ENCODE measurements at regions of chr1 and their contacts with region 1.

Region 1: GRCh38 chr1:98344731-98345130 is 316.8 kb upstream of the SNX7 start:
- DNase-seq: peak; percentile 88
- H3K4me3 ChIP-seq: no peak overlapping the region
- H3K27ac ChIP-seq: peak overlapping the region; percentile 90
- H3K4me1 ChIP-seq: peaks cover 38% of the 10 kb centered on the region
- H3K27me3 ChIP-seq: no peaks in the 10 kb centered on the region
- CTCF ChIP-seq: no peak
- POLR2A ChIP-seq: peak; percentile 12

Region 2: GRCh38 chr1:98260839-98261238 is 83.9 kb before region 1 on chr1:
- CTCF ChIA-PET with region 1: no interaction called
- POLR2A ChIA-PET with region 1: no interaction called
- dilution Hi-C with region 1: no loop called
- intact Hi-C with region 1: loop called (anchors 1 kb)
- DNase-seq: peak; percentile 12
- H3K4me3 ChIP-seq: no peak overlapping the region
- H3K27ac ChIP-seq: no peak overlapping the region
- H3K4me1 ChIP-seq: peaks cover 41% of the 10 kb centered on the region
- H3K27me3 ChIP-seq: no peaks in the 10 kb centered on the region
- CTCF ChIP-seq: peak in 1 of 2 donors; percentile 37
- POLR2A ChIP-seq: no peak

Region 3: GRCh38 chr1:98388441-98388840 is 43.7 kb after region 1 on chr1:
- CTCF ChIA-PET with region 1: interaction called, 4 read pairs
- POLR2A ChIA-PET with region 1: interaction called, 3 read pairs
- dilution Hi-C with region 1: no loop called
- intact Hi-C with region 1: loop called (anchors 1 kb)
- DNase-seq: peak; percentile 91
- H3K4me3 ChIP-seq: peak overlapping the region in 1 of 3 experiments; percentile 27
- H3K27ac ChIP-seq: peak overlapping the region; percentile 80
- H3K4me1 ChIP-seq: peaks cover 57% of the 10 kb centered on the region
- H3K27me3 ChIP-seq: no peaks in the 10 kb centered on the region
- CTCF ChIP-seq: no peak
- POLR2A ChIP-seq: peak; percentile 18